Heart right ventricle (tissue), 16 donors: ENCODE measurements at regions of chr7 and their contacts with region 1.

Region 1: GRCh38 chr7:66075590-66076461 is at the start of gene ASL:
- DNase-seq: peak; percentile 93 to 95
- ATAC-seq: peak; percentile 99 to 100 (median 100)
- H3K4me3 ChIP-seq: peak within 1 kb of the TSS; percentile 49 to 94 (median 78)
- H3K27ac ChIP-seq: peak within 1 kb of the TSS in 9 of 10 donors; percentile 69 to 91 (median 73)
- H3K4me1 ChIP-seq: peaks cover 0 to 28% (median 15%) of the 10 kb centered on the region in 9 donors
- H3K27me3 ChIP-seq: no peaks in the 10 kb centered on the region
- CTCF ChIP-seq: no peak
- total RNA-seq, gene ASL: 10.1 to 17.0 (median 12.8) TPM

Region 2: DNA sequence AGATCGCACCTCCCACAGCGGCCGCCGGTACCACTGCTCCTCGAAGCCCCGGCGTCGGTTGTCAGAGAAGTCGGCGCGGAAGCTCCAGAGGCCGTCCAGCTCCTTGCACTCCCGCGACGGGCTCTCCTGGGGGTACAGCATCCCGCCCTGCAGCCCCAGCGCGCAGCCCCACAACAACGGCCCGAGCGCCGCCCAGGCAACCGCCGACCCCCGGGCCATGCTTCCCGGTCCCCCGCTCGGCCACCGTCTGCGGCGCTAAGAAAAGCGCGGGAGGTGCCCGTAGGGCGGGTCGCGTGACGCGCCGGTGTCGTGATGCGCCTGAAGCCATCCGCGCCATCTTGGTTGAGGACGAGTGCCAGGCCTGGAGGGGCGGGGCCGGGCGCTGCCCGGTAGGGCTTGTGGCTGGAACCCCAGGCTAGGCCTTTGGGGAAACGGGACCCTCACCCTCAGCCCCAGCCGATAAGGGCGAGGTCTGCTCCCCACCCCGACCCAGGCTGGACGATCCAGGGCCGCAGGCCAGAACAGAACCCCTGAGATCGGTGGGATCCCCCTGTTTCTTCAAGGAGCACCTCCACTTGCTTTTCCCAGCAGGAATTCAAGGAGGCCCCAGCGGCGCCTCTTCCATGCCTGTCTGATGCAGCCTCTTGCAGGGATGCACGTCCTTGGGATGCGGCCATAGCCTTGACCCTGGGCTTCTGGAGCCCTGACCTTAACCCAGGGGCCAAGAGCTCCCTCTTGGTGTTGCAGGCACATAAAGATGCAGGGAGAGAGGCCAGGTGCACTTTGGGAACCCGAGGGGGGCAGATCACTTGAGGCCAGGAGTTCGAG is 93.6 kb before region 1 on chr7 and contains the start of gene GUSB:
- intact Hi-C with region 1: loop called in 1 of 10 experiments (anchors 10 kb)
- DNase-seq: peak; percentile 93 to 94
- ATAC-seq: peak; percentile 96 to 98 (median 97)
- H3K4me3 ChIP-seq: peak within 1 kb of the TSS; percentile 65 to 99 (median 91)
- H3K27ac ChIP-seq: peak within 1 kb of the TSS; percentile 25 to 96 (median 89)
- H3K4me1 ChIP-seq: peaks cover 0 to 28% (median 21%) of the 10 kb centered on the region in 9 donors
- H3K27me3 ChIP-seq: no peaks in the 10 kb centered on the region
- CTCF ChIP-seq: no peak
- total RNA-seq, gene GUSB: 10.8 to 30.6 (median 15.6) TPM

Region 3: GRCh38 chr7:66114793-66115649 is 39.2 kb after region 1 on chr7 and contains the start of gene CRCP:
- intact Hi-C with region 1: loop called in 2 of 10 experiments (anchors 5 kb)
- DNase-seq: peak; percentile 79 to 83
- ATAC-seq: peak; percentile 95 to 97 (median 96)
- H3K4me3 ChIP-seq: peak within 1 kb of the TSS; percentile 64 to 99 (median 86)
- H3K27ac ChIP-seq: peak within 1 kb of the TSS; percentile 87 to 99 (median 95)
- H3K4me1 ChIP-seq: peaks cover 4 to 55% (median 45%) of the 10 kb centered on the region in 9 donors
- H3K27me3 ChIP-seq: no peaks in the 10 kb centered on the region
- CTCF ChIP-seq: peak in 3 of 9 donors; percentile 31 to 46 (median 39)
- total RNA-seq, gene CRCP: 15.4 to 31.1 (median 23.1) TPM